PC-3 (cell line): ENCODE measurements at regions of chr3 and their contacts with region 1.

Region 1: DNA sequence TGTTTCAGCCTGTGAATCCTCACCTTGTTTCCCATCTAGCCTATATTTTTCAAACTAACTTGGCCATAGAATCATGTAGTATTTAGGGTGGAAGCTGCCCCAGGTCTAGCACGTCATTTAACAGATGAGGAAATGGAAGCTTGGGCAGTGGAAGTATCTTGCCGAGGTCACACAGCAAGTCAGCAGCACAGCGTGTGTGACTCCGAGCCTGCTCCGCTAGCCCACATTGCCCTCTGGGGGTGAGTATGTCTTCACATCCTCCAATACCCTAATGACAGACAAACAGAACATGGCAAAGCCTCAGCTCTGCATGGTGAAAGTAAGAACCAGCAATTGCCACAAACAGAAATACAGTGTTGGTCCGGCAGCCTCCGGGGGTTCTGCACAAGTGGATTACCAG is 2.2 kb upstream of the CCR5 start:
- DNase-seq: peak; percentile 68
- ATAC-seq: peak; percentile 88
- H3K4me3 ChIP-seq: no peak overlapping the region
- H3K27ac ChIP-seq: no peak overlapping the region
- H3K4me1 ChIP-seq: peaks cover 13% of the 10 kb centered on the region
- H3K27me3 ChIP-seq: no peaks in the 10 kb centered on the region
- CTCF ChIP-seq: peak; percentile 72

Region 2: DNA sequence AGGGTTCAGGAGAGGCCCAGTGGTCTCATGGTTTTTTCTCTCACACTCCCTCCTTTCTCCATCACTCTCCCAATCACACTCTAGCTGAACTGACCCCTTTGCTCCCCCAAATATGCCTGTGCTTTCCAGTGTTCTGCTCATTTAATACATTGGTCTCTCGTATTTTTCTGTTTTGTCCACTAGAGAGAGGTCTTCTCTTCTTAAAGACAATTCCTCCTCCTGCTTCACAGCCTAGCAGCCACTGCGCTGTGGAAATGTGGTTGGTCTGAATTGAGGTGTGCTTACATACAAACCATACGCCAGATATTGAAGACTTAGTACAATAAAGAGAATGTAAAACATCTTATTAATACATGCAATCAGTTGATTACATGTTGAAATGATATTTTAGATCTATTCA is 280.7 kb before region 1 on chr3:
- CTCF ChIA-PET with region 1: interaction called, 5 read pairs
- POLR2A ChIA-PET with region 1: no interaction called
- intact Hi-C with region 1: loop called (anchors 1 kb)
- DNase-seq: peak; percentile 68
- ATAC-seq: peak; percentile 62
- H3K4me3 ChIP-seq: no peak overlapping the region
- H3K27ac ChIP-seq: no peak overlapping the region
- H3K4me1 ChIP-seq: peaks cover 36% of the 10 kb centered on the region
- H3K27me3 ChIP-seq: no peaks in the 10 kb centered on the region
- CTCF ChIP-seq: peak; percentile 69

Region 3: DNA sequence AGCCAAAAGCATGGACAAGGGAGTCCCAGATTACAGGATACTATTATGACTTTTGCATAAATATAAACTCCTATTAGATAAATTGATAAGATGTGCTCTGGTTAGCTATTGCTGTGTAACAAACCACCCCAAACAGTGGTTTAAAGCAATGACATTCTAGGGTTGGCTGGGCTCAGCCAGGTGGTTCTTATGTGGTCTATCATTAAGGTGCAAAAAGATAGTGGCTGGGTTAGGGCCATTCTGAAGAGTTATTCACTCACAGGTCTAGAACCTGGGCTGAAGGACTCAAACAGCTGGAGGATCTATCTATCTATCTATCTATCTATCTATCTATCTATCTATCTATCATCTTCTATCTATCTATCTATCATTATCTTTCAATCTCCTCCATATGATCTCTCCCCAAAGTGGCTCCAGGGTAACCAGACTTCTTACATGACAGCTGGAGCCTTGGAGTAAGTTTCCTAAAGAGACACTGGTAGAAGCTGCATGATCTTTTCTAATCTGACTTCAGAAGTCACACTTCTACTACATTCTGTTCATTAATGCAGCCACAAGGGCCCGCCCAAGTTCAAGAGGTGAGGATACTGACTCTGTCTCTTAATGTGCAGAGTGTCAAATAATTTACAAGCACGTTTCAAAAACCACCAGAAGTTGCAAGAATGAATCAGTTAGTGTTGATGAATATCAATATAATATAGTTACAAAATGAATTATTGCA is 266.4 kb before region 1 on chr3:
- CTCF ChIA-PET with region 1: no interaction called
- POLR2A ChIA-PET with region 1: no interaction called
- intact Hi-C with region 1: loop called (anchors 2 kb)
- DNase-seq: no peak
- ATAC-seq: no peak
- H3K4me3 ChIP-seq: no peak overlapping the region
- H3K27ac ChIP-seq: no peak overlapping the region
- H3K4me1 ChIP-seq: peaks cover 30% of the 10 kb centered on the region
- H3K27me3 ChIP-seq: no peaks in the 10 kb centered on the region
- CTCF ChIP-seq: no peak; the same call in 1 of the 2 replicates

Region 4: GRCh38 chr3:46208167-46208704 is 160.3 kb before region 1 on chr3 and contains the start of gene CCR1:
- CTCF ChIA-PET with region 1: interaction called, 5 read pairs
- POLR2A ChIA-PET with region 1: interaction called, 4 read pairs
- intact Hi-C with region 1: loop called (anchors 2 kb)
- DNase-seq: peak; percentile 78
- ATAC-seq: peak; percentile 79
- H3K4me3 ChIP-seq: no peak within 1 kb of the TSS
- H3K27ac ChIP-seq: no peak within 1 kb of the TSS
- H3K4me1 ChIP-seq: peaks cover 5% of the 10 kb centered on the region; the same call in 1 of the 2 replicates
- H3K27me3 ChIP-seq: no peaks in the 10 kb centered on the region
- CTCF ChIP-seq: peak; percentile 94
- total RNA-seq, gene CCR1: 0.15 TPM in 1 of 2 replicates, not detected in the other

Region 5: DNA sequence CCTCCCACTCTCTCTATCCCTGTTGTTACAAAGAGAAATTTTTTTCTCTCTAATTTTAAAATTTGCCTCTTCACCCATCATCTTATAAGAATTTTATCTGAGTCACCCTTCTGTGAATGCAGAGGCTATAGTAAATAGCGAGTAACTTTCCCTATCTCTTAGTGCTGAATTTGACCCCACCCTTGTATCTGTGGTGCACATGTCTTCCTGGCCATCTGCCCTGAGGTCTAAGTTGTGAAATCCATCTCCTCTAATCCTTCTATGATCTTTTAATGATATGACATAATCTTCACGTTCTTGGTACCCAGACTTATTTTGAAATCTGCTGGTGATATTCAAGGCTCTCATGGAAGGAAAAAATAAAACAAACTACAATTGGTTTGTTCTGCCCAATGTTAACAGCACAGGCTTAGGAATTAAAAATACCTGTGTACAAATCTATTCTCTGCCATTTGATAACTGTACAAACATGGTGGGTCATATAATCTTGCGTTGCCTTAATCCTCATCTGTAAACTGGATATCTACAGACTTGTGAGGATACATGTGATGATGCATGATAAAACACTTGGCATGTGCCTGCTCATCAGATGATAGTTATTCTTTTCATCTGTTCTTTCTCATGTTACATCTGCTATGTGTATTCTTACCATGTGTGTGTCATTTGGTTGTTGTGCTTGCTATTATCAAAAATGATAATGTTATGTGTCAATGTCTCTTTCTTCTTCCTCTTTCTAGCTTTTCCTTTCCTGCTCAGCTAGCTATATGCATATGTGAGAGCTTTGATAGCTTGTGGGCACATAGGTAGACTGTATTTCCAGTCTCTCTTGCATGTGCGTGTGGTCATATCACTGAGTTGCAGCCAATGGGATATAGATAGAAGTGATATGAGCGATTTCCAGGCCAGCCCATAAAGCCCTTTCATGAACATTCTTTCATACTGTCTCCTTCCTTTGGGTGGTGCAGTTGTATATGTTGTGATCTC is 140.0 kb before region 1 on chr3:
- CTCF ChIA-PET with region 1: interaction called, 3 read pairs
- POLR2A ChIA-PET with region 1: no interaction called
- intact Hi-C with region 1: loop called (anchors 5 kb)
- DNase-seq: peak; percentile 87
- ATAC-seq: peak; percentile 68
- H3K4me3 ChIP-seq: no peak overlapping the region
- H3K27ac ChIP-seq: no peak overlapping the region
- H3K4me1 ChIP-seq: peaks cover 14% of the 10 kb centered on the region
- H3K27me3 ChIP-seq: no peaks in the 10 kb centered on the region
- CTCF ChIP-seq: 0 out of 2 replicates have a peak, but pooled peaks have one; percentile 26

Region 6: GRCh38 chr3:46276502-46277099 is 92.0 kb before region 1 on chr3:
- CTCF ChIA-PET with region 1: interaction called, 3 read pairs
- POLR2A ChIA-PET with region 1: no interaction called
- intact Hi-C with region 1: loop called (anchors 1 kb)
- DNase-seq: peak; percentile 65
- ATAC-seq: peak; percentile 65
- H3K4me3 ChIP-seq: no peak overlapping the region
- H3K27ac ChIP-seq: no peak overlapping the region
- H3K4me1 ChIP-seq: peaks cover 9% of the 10 kb centered on the region
- H3K27me3 ChIP-seq: no peaks in the 10 kb centered on the region
- CTCF ChIP-seq: peak; percentile 77

Region 7: GRCh38 chr3:46976326-46977190 is 608.0 kb after region 1 on chr3 and contains the start of gene CCDC12:
- CTCF ChIA-PET with region 1: no interaction called
- POLR2A ChIA-PET with region 1: interaction called, 21 read pairs
- intact Hi-C with region 1: no loop called
- DNase-seq: peak; percentile 98
- ATAC-seq: peak; percentile 79
- H3K4me3 ChIP-seq: peak within 1 kb of the TSS; percentile 87
- H3K27ac ChIP-seq: peak within 1 kb of the TSS; percentile 87
- H3K4me1 ChIP-seq: peaks cover 29% of the 10 kb centered on the region
- H3K27me3 ChIP-seq: no peaks in the 10 kb centered on the region
- CTCF ChIP-seq: no peak
- total RNA-seq, gene CCDC12: 44.2 and 67.8 TPM in 2 replicates